H1 (cell line): ENCODE measurements at regions of chr11 and their contacts with region 1.

Region 1: DNA sequence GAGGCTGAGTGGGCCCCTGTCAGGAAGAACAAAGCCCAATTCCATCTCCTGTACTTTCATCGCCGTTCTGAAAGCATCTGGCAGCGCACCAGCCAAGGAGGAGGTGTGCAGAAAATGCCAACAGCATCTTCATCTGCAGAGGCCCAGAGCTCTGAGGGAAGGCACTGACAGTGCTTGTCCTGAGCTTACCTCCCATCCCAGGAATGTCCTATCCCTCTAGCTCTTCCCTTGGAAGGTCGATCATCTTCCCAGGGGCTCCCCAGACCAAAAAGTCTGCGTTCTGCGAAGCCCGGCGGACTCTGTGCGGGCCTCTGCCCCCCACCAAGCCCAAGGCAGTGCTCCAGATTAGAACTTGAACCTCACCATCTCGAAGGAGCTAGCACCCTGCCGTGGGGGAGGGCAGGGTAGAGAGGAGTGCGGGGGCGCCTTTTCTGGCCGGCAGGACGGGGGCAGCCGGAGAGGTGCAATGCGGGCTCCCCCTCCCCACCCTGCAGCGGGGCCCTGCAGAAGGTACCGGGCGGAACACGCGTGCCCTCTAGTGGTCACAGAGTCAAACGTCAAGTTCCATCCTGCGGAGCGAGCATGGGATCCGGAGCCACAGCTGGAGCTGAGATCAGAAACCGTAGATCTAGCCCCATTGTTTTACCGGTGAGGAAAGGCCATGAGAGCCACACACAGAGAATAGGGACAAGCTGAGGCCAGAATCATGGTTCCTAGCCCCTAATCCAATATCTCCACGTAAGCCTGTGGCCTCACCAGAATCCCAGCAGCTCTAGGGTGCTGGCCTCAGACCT is 5.0 kb downstream of the SCN2B start:
- DNase-seq: peak in 1 of 2 experiments; percentile 92
- H3K4me3 ChIP-seq: peak overlapping the region; percentile 10 to 68 (median 41); a peak in 7 of 8 replicates
- H3K27ac ChIP-seq: no peak overlapping the region
- H3K4me1 ChIP-seq: peaks cover 0 to 27% (median 15%) of the 10 kb centered on the region in 4 experiments
- H3K27me3 ChIP-seq: peaks cover 6 to 87% (median 66%) of the 10 kb centered on the region in 4 experiments
- CTCF ChIP-seq: peak; percentile 90 to 94 (median 90)
- EP300 ChIP-seq: 0 out of 3 replicates have a peak, but pooled peaks of 1 of the 2 experiments have one; percentile 19
- POLR2A ChIP-seq: no peak
- RAD21 ChIP-seq: peak; percentile 94 to 96

Region 2: DNA sequence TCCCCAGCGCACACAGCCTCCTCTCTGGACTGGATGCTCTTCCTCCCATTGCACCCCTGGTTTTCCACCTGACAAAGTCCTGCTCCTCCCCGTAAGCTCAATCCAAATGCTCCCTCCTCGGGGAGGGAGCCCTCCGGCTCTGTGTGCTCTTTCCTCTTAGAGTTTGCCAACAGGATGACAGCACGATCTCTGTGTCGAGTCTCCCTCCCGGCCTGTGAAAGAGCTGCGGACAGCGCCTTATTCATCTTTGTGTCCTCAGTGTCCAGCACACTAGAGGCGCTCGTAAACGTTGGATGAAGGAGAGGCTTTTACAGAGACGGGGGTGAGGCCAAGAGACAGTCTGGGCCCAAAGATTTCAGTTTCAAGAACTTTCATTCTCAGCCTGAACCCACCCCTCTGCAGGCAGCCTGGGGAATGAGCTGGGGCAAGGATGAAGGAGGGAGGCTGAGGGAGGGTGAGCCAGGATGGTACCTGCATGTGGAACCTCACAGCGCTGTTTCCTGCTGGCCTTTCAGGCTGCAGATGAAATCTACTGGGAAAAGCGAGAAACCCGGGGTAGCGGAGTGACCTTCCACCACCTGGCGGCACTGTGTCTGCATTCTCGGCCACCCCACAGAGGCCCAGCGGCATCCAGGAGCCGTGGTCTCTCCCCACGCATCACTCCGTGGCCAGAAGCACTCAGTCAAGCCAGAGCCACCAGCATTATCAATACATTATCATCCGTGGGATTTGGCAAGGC is 103.1 kb before region 1 on chr11:
- CTCF ChIA-PET with region 1: interaction called, 11 read pairs
- POLR2A ChIA-PET with region 1: no interaction called
- DNase-seq: peak in 1 of 2 experiments; percentile 72
- H3K4me3 ChIP-seq: no peak overlapping the region
- H3K27ac ChIP-seq: no peak overlapping the region
- H3K4me1 ChIP-seq: peaks cover 0 to 6% (median 3%) of the 10 kb centered on the region in 4 experiments; a peak in 3 of 7 replicates
- H3K27me3 ChIP-seq: no peaks in the 10 kb centered on the region
- CTCF ChIP-seq: peak; percentile 71 to 75 (median 72)
- EP300 ChIP-seq: no peak
- POLR2A ChIP-seq: no peak
- RAD21 ChIP-seq: peak; percentile 60 to 78

Region 3: DNA sequence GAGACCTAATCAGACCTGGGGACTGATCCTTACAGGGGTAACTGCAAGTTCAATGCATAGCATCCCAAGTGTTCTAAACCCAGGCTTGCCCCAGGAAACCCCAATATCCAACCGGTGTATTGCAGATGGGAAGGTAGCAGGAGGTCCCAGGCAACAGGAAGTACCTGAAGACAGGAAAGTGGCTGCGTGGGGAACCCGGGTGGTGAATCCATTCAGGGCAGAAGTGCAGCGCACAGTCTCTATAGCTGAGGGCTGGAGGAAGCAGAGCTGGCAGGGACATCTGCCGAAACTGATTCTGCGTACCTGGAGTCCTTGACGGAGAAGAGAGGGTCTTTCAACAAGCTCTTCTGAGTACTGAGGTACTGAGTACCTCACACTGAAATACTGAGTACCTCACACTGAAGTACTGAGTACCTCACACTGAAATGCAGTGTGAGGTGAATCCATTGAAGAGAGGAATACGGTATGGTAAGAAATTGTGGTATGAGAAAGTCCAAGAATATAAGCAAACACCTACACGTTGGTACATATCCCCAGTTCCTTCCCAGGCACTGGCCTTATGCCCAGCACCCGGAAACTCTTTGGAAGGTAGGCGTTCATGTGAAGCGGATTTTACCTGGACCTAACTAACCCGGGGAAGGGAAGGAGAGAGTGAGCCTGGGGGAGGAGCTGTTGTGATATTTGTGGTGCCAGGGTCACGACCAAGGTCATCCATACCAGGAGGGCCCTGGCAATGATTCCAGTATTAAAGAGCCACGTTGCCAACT is 38.9 kb before region 1 on chr11:
- CTCF ChIA-PET with region 1: interaction called, 22 read pairs
- POLR2A ChIA-PET with region 1: no interaction called
- DNase-seq: no peak
- H3K4me3 ChIP-seq: no peak overlapping the region
- H3K27ac ChIP-seq: no peak overlapping the region
- H3K4me1 ChIP-seq: no peaks in the 10 kb centered on the region; a peak in 1 of 7 replicates
- H3K27me3 ChIP-seq: no peaks in the 10 kb centered on the region
- CTCF ChIP-seq: no peak
- EP300 ChIP-seq: no peak
- POLR2A ChIP-seq: no peak
- RAD21 ChIP-seq: no peak

Region 4: DNA sequence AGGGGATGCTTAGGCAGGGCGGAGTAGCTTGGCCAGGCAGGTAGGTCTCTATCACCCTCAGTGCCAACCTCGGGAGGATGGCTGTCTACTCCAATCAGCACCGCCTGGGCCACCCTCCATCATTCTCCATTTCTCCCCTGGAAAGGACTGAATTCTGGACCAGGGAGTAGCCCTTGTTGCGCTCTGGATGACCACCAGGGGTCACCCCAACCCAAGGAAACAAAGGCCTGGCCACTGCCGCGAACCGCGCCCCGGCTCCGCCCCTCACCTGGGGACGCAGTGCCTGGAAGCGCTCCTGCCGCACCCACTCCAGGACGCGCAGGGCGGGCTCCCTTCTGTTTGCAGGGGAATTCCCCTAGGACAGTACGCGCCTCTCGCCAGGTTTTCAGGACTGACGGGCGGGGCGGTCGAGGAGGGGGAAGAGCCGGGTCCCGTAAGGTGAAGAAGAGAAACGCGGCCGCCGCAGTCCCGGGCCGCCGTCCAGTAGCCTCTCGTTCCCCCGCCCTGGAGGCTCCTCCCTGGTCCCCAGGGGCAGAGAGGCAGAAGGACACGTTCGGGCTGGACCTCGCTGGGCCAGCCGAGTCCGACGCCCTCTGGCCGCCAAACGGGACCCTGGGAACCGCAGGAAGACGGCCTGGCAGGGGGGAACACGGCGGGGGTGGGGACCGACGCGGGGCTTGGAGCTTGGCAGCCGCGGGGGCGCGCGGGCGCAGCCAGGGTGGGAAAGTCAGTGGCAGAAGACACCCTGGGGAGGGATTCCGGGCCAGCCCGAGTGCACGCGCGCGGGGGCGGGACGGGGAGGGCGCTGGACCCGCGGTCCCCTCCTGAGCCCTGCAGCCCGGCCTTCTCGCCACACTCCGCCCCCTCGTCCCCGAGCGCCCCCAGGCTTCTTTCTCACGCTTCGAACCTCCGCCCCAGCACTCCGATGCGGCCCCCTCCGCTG is 25.9 kb before region 1 on chr11:
- CTCF ChIA-PET with region 1: interaction called, 245 read pairs
- POLR2A ChIA-PET with region 1: interaction called, 7 read pairs
- DNase-seq: peak; percentile 66 to 97
- H3K4me3 ChIP-seq: peak overlapping the region; percentile 34 to 70 (median 53)
- H3K27ac ChIP-seq: no peak overlapping the region
- H3K4me1 ChIP-seq: peaks cover 0 to 21% (median 7%) of the 10 kb centered on the region in 4 experiments; a peak in 6 of 7 replicates
- H3K27me3 ChIP-seq: peaks cover 0 to 31% (median 17%) of the 10 kb centered on the region in 4 experiments; a peak in 6 of 7 replicates
- CTCF ChIP-seq: peak; percentile 75 to 90 (median 90)
- EP300 ChIP-seq: no peak
- POLR2A ChIP-seq: no peak
- RAD21 ChIP-seq: peak; percentile 97 to 99

Region 5: DNA sequence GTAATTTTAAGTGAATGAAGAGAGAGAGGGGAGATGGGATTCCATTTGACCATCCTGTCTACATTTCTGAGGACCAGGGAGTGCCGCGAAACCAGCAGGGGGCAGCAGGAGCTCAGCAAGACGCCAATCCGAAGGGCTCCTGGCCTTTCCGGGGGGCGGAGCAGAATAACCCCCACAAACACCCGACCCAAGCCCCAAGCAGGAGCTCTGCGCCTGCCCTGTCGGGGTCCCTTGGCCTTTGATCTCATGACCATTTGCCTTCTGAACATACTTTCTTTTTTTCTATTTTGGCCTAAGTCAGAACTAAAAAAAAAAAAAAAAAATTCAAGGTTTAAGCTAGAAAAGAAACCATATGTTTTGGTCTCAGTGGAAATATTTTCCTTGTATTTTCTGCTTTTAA is 26.9 kb after region 1 on chr11:
- CTCF ChIA-PET with region 1: interaction called, 10 read pairs
- POLR2A ChIA-PET with region 1: no interaction called
- DNase-seq: peak; percentile 33 to 85
- H3K4me3 ChIP-seq: no peak overlapping the region
- H3K27ac ChIP-seq: no peak overlapping the region
- H3K4me1 ChIP-seq: peaks cover 2 to 14% (median 4%) of the 10 kb centered on the region in 4 experiments; a peak in 5 of 7 replicates
- H3K27me3 ChIP-seq: no peaks in the 10 kb centered on the region
- CTCF ChIP-seq: peak; percentile 79 to 86 (median 79)
- EP300 ChIP-seq: no peak
- POLR2A ChIP-seq: no peak
- RAD21 ChIP-seq: peak; percentile 90 to 93

Region 6: DNA sequence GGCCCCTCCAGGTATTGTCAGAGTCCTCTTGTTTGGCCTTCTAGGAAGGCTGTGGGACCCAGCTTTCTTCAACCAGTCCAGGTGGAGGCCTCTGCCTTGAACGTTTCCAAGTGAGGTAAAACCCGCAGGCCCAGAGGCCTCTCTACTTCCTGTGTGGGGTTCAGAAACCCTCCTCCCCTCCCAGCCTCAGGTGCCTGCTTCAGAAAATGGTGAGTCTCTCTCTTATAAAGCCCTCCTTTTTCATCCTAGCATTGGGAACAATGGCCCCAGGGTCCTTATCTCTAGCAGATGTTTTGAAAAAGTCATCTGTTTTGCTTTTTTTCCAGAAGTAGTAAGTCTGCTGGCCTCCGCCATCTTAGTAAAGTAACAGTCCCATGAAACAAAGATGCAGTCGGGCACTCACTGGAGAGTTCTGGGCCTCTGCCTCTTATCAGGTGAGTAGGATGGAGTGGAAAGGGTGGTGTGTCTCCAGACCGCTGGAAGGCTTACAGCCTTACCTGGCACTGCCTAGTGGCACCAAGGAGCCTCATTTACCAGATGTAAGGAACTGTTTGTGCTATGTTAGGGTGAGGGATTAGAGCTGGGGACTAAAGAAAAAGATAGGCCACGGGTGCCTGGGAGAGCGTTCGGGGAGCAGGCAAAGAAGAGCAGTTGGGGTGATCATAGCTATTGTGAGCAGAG is 133.2 kb after region 1 on chr11 and contains the start of gene CD3E:
- CTCF ChIA-PET with region 1: interaction called, 10 read pairs
- POLR2A ChIA-PET with region 1: no interaction called
- DNase-seq: no peak
- H3K4me3 ChIP-seq: no peak within 1 kb of the TSS
- H3K27ac ChIP-seq: no peak within 1 kb of the TSS
- H3K4me1 ChIP-seq: no peaks in the 10 kb centered on the region
- H3K27me3 ChIP-seq: no peaks in the 10 kb centered on the region
- CTCF ChIP-seq: no peak
- EP300 ChIP-seq: no peak
- POLR2A ChIP-seq: no peak
- RAD21 ChIP-seq: no peak
- total RNA-seq, gene CD3E: not detected in 2 replicates